CD8-positive, alpha-beta T cell (primary cell): ENCODE measurements at regions of chr7 and their contacts with region 1.

Region 1: DNA sequence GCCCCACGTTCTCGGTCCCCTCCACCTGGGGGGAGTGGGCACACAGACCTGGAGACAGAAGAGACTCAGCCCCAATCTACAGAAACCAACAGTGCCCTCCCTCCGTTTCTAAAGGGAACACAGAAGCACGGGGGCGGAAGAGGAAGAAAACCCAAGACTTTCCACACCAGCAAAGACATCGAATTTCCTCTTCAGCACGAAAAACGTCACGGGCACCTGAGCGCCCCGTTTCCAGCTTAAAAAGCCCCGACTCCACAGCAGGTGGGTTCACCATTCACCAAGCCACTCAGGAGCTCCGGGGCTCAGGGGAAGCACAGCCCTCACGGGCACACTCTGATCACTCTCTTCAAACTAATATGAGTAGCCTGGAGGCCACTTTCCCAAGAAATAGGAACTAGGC is 19.6 kb downstream of the NUDT1 start:
- DNase-seq: peak in 4 of 9 experiments; percentile 30 to 68 (median 52)
- ATAC-seq: peak; percentile 62
- H3K4me3 ChIP-seq: peak overlapping the region in 1 of 2 experiments; percentile 13
- H3K4me3 Mint-ChIP-seq: peak overlapping the region; percentile 64
- H3K27ac ChIP-seq: peak overlapping the region; percentile 17 to 25
- H3K27ac Mint-ChIP-seq: peak overlapping the region; percentile 86
- H3K4me1 ChIP-seq: no peaks in the 10 kb centered on the region
- H3K4me1 Mint-ChIP-seq: peaks cover 9% of the 10 kb centered on the region
- H3K27me3 ChIP-seq: no peaks in the 10 kb centered on the region
- H3K27me3 Mint-ChIP-seq: no peaks in the 10 kb centered on the region
- CTCF ChIP-seq: no peak

Region 2: DNA sequence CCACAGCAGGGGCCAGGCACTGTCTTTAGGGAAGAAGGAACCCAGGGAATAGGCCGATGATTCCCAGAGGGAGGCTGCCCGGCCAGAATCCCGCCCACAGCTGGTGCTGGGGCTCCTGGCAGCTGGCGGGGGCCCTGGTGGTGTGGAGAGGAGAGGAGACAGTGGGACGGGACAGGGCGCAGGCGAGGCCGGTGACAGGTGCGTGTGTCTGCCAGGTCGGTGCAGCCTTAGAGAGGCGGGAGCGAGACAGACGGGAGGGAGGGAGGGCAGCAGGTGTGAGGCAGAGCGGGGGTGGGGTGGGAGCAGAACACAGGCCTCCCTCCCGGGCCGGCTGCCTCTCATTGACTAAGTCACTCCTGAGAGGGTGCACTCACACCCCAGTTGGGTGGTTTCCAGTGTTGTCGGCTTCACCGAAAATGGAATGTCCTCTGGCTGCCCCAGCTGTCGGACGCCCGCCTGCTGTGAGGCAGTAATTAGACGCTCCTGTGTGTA is 536.4 kb before region 1 on chr7:
- CTCF ChIA-PET with region 1: no interaction called
- POLR2A ChIA-PET with region 1: no interaction called
- intact Hi-C with region 1: no loop called
- DNase-seq: no peak
- ATAC-seq: no peak
- H3K4me3 ChIP-seq: no peak overlapping the region
- H3K4me3 Mint-ChIP-seq: no peak overlapping the region
- H3K27ac ChIP-seq: no peak overlapping the region
- H3K27ac Mint-ChIP-seq: no peak overlapping the region
- H3K4me1 ChIP-seq: no peaks in the 10 kb centered on the region
- H3K4me1 Mint-ChIP-seq: no peaks in the 10 kb centered on the region
- H3K27me3 ChIP-seq: peaks cover 0 to 3% of the 10 kb centered on the region in 2 experiments
- H3K27me3 Mint-ChIP-seq: peaks cover 9% of the 10 kb centered on the region
- CTCF ChIP-seq: no peak

Region 3: DNA sequence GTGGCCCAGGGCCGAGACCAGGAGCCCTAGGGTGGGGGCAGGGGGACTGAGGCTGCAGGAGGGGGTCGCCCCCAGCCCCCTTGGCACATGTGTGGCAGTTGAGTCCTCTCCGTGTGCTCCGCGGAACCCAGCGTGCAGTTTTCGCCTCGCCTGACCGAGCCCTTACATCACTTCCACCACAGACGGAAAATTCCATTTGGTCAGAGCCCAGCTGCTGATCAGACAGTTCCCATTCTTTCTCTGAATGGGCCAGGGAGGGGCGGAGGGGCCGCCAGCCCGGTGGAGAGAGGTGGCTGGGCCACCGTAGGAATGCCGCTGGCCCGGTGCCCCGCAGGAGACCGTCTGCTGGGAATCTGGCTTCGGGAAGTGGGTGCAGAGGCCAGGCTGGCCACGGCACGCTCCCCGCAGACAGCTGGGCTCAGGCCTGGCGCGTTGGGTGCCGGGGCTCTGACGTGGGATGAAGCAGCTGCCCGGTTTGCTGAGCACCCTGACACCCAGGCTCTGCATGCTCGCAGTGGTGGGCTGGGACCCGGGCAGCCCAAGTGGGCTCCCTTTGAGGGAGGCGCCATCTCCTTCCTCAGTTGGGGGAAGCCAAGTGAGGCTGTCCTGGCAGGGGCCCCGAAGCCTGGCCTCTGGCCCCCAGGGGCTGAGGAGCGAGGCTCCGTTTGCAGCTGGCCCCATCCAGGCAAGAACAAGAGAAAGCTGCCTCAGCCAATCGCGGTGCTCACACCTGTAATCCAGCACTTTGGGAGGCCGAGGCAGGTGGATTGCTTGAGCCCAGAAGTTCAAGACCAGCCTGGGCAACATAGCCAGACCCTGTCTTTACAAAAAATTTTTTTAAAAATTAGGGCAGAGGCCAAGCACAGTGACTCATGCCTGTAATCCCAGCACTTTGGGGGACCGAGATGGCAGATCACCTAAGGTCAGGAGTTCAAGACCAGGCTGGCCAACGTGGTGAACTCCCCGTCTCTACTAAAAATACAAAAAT is 380.1 kb after region 1 on chr7:
- CTCF ChIA-PET with region 1: no interaction called
- POLR2A ChIA-PET with region 1: no interaction called
- intact Hi-C with region 1: no loop called
- DNase-seq: peak in 1 of 9 experiments; percentile 33
- ATAC-seq: no peak
- H3K4me3 ChIP-seq: no peak overlapping the region
- H3K4me3 Mint-ChIP-seq: no peak overlapping the region
- H3K27ac ChIP-seq: no peak overlapping the region
- H3K27ac Mint-ChIP-seq: no peak overlapping the region
- H3K4me1 ChIP-seq: peaks cover 27% of the 10 kb centered on the region
- H3K4me1 Mint-ChIP-seq: peaks cover 23% of the 10 kb centered on the region
- H3K27me3 ChIP-seq: no peaks in the 10 kb centered on the region
- H3K27me3 Mint-ChIP-seq: no peaks in the 10 kb centered on the region
- CTCF ChIP-seq: no peak

Region 4: DNA sequence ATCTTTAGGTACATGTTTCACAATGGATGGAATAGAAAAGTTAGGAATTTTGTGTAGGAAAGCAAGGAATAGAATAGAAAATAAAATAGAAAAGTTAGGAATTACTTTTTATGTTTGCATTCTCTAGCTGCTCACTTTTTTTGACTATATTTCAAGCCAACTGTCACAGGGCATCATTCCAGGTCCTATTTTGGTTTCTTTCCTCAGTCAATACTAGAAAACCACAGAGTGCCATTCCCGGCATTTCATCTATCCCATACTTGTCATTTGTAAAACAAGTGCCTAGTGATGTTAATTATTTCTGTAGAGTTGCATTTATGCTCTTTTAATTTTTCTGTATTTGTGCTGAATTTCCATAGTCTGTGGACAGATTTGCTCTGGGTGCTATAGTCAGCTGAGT is 1105.7 kb after region 1 on chr7:
- CTCF ChIA-PET with region 1: no interaction called
- POLR2A ChIA-PET with region 1: no interaction called
- intact Hi-C with region 1: loop called in 1 of 2 experiments (anchors 10 kb)
- DNase-seq: no peak
- ATAC-seq: no peak
- H3K4me3 ChIP-seq: no peak overlapping the region
- H3K4me3 Mint-ChIP-seq: no peak overlapping the region
- H3K27ac ChIP-seq: no peak overlapping the region
- H3K27ac Mint-ChIP-seq: no peak overlapping the region
- H3K4me1 ChIP-seq: no peaks in the 10 kb centered on the region
- H3K4me1 Mint-ChIP-seq: peaks cover 6% of the 10 kb centered on the region
- H3K27me3 ChIP-seq: peaks cover 0 to 3% of the 10 kb centered on the region in 2 experiments
- H3K27me3 Mint-ChIP-seq: peaks cover 8% of the 10 kb centered on the region
- CTCF ChIP-seq: no peak